ENCODE measurements at regions of chr17 and their contacts with region 1.

Region 1: DNA sequence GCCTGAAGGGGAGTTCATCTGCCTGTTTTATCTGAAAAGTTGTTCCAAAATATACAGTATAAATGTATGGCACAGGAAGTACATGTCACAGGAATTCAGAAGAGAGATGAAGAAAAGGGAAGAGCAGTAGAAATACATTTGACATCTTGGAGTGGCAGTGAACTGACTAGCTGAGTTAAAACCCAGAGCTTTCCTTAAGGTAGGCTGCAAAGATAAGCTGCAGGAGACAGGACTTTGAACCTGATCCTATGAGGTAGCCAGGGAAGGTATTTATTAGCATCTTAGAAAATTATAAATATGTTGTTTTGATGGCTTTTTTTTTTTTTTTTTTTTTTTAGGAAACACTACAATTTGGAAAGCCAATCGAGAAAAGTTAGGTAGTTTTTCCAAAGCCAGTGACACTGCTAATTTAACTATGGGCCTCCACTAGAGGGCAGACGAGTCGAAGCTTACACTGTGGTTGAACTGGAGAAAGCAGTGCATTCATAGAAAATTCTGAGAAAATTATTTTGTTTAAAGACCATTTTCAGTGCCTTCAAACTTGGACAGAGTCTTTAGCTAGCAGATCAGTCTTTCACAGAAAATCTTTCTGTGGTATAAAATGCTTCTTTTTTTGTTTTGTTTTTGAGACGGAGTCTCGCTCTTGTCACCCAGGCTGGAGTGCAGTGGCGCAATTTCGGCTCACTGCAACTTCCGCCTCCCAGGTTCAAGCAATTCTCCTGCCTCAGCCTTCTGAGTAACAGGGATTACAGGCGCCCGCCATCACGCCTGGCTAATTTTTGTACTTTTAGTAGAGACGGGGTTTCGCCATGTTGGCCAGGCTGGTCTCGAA is 122.3 kb downstream of the SSH2 start:
- DNase-seq: peak; percentile 64
- CTCF ChIP-seq: peak; percentile 80

Region 2: GRCh38 chr17:29931231-29931932 is 123.6 kb after region 1 on chr17:
- in situ Hi-C with region 1: loop called (anchors 5 kb)
- DNase-seq: peak; percentile 68
- CTCF ChIP-seq: peak; percentile 77

Region 3: GRCh38 chr17:30021708-30022317 is 214.1 kb after region 1 on chr17:
- in situ Hi-C with region 1: loop called (anchors 10 kb)
- DNase-seq: peak; percentile 55
- CTCF ChIP-seq: peak; percentile 75

Measured in GM13977 (cell line).